Psoas muscle (tissue), 8 donors: ENCODE measurements at regions of chr5 and their contacts with region 1.

Region 1: DNA sequence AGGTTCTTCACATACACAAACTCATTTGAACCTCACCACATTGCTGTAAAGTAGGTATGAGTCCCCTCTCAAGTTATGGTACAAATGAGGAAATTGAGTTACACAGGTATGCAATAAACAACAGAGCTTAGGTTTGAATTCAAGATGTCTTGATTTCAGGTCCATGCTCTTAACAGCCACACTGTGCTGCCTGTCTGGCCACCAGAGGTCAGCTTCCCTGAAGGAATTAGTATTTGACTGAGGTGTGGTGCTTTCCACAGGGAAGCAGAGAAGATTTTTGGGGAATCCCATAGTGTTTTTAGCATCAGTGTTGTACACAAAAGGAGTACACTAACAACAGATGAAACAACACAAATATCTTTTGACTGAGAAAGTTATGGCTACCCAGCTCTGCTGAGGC is 94.4 kb upstream of the ITGA1 start:
- DNase-seq: peak; percentile 16 to 49
- ATAC-seq: no peak
- H3K4me3 ChIP-seq: no peak overlapping the region
- H3K27ac ChIP-seq: no peak overlapping the region
- H3K4me1 ChIP-seq: peaks cover 5% of the 10 kb centered on the region
- H3K27me3 ChIP-seq: no peaks in the 10 kb centered on the region
- CTCF ChIP-seq: peak; percentile 44

Region 2: DNA sequence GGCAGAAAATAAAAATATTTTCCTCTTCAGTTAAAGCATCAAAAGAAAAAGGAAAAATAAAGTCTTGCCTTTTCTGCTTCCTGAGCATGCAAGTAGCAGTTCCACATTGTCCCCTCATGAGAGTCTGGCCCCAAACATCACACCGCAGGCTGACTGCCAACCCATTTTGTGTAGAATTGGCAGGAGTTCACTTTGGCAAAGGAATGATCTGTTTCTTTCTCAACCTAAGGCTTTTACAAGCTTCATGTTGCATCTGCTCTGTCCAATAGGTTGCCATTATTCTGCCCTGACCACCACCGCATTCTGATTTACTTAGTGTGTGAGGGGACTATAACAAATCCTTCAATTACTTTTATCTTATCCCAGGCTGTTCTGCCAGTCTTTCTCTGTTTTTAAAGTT is 1060.5 kb before region 1 on chr5:
- intact Hi-C with region 1: no loop called
- DNase-seq: no peak
- ATAC-seq: no peak
- H3K4me3 ChIP-seq: no peak overlapping the region
- H3K27ac ChIP-seq: no peak overlapping the region
- H3K4me1 ChIP-seq: no peaks in the 10 kb centered on the region
- H3K27me3 ChIP-seq: no peaks in the 10 kb centered on the region
- CTCF ChIP-seq: no peak

Region 3: GRCh38 chr5:52648726-52649125 is 44.6 kb before region 1 on chr5:
- intact Hi-C with region 1: no loop called
- DNase-seq: no peak
- ATAC-seq: no peak
- H3K4me3 ChIP-seq: no peak overlapping the region
- H3K27ac ChIP-seq: no peak overlapping the region
- H3K4me1 ChIP-seq: no peaks in the 10 kb centered on the region
- H3K27me3 ChIP-seq: no peaks in the 10 kb centered on the region
- CTCF ChIP-seq: no peak

Region 4: DNA sequence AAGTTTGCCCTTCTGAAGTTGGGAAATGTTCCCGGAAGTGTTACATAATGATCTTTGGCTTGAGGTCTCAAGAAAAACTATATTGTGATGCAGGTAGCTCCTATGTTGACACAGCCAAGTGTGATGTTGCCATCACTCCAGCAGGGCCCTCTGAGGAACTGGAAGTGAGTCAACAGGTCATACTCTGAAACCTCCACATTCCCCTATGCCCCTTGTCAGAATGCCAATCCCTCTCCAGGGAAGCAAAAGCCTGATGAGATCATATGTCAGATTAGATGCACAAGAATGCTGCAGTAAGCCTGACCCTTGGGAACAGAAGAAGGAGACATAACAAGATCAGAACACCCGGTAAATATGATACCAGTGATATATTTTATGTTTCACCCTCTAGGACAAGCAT is 229.1 kb after region 1 on chr5:
- intact Hi-C with region 1: loop called in 1 of 2 experiments (anchors 5 kb)
- DNase-seq: no peak
- ATAC-seq: no peak
- H3K4me3 ChIP-seq: no peak overlapping the region
- H3K27ac ChIP-seq: no peak overlapping the region
- H3K4me1 ChIP-seq: no peaks in the 10 kb centered on the region
- H3K27me3 ChIP-seq: no peaks in the 10 kb centered on the region
- CTCF ChIP-seq: no peak